ENCODE measurements at regions of chr19 and their contacts with region 1.

Region 1: DNA sequence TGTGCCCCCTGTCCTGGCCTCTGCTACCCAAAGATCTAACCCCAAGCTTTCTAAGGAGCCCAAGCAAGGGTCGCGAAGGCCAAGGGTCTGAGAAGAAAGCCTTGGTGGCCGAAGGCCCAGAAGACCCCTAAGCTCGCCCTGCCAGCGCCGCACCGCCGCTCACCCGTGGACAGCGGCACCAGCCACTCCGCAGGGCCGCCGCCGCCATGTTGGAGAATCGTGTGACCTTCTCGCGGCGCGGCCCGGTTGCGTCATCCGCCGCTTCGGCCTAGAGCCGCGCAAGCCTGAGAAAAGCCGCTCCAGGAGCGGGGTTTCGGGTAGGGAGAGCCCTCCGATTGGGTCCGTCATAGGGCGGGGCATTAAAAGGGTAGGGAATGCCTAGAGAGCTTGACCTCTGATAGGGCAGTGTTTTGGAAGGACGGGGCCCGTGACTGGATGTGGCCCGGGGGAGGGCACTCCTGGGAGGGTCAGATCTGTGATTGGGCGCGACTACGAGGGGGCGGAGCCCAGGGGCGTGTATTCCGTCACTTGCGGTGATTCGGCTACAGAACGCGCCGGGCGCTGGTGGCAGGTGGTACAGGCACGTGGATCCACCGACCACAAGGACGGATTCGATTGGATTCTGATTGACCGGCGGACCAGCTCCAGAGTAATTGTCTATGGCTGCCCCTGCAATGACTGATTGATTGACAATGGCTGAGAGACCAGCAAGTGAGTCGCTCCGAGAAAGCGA is at the start of gene TIMM44:
- DNase-seq: peak; percentile 100
- ATAC-seq: peak; percentile 98
- H3K4me3 ChIP-seq: peak within 1 kb of the TSS; percentile 91
- H3K27ac ChIP-seq: peak within 1 kb of the TSS; percentile 75
- H3K4me1 ChIP-seq: peaks cover 14% of the 10 kb centered on the region
- H3K27me3 ChIP-seq: no peaks in the 10 kb centered on the region
- CTCF ChIP-seq: no peak
- total RNA-seq, gene TIMM44: 191 and 262 TPM in 2 replicates

Region 2: GRCh38 chr19:7986321-7987083 is 42.9 kb after region 1 on chr19:
- CTCF ChIA-PET with region 1: interaction called, 3 read pairs
- POLR2A ChIA-PET with region 1: no interaction called
- intact Hi-C with region 1: loop called (anchors 5 kb)
- DNase-seq: peak; percentile 94
- ATAC-seq: peak; percentile 71
- H3K4me3 ChIP-seq: peak overlapping the region; percentile 19; the same call in 1 of the 2 replicates
- H3K27ac ChIP-seq: peak overlapping the region; percentile 100
- H3K4me1 ChIP-seq: peaks cover 59% of the 10 kb centered on the region
- H3K27me3 ChIP-seq: no peaks in the 10 kb centered on the region
- CTCF ChIP-seq: no peak

Region 3: DNA sequence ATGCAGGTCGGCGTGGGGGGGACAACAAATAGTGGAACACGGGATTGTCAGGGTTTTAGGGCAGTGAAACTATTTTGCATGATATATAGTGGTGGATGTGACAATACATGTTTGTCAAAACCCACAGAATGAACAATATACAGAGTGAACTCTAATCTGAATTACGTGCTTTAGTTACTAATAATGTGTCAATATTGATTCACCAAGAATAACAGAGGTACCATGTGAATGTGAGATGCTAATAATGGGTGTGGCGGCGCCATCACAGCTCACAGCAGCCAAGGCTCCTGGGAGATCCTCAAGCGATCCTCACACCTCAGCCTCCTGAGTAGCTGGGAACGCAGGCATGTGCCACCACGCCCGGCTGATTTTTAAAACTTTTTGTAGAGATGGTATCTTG is 49.0 kb after region 1 on chr19:
- CTCF ChIA-PET with region 1: interaction called, 6 read pairs
- POLR2A ChIA-PET with region 1: interaction called, 16 read pairs
- intact Hi-C with region 1: loop called (anchors 5 kb)
- DNase-seq: peak; percentile 96
- ATAC-seq: peak; percentile 76
- H3K4me3 ChIP-seq: peak overlapping the region; percentile 18; the same call in 1 of the 2 replicates
- H3K27ac ChIP-seq: peak overlapping the region; percentile 89
- H3K4me1 ChIP-seq: peaks cover 64% of the 10 kb centered on the region
- H3K27me3 ChIP-seq: no peaks in the 10 kb centered on the region
- CTCF ChIP-seq: no peak

Region 4: GRCh38 chr19:8158411-8159074 is 214.9 kb after region 1 on chr19:
- CTCF ChIA-PET with region 1: no interaction called
- POLR2A ChIA-PET with region 1: no interaction called
- intact Hi-C with region 1: no loop called
- DNase-seq: peak; percentile 91
- ATAC-seq: peak; percentile 55
- H3K4me3 ChIP-seq: no peak overlapping the region
- H3K27ac ChIP-seq: no peak overlapping the region
- H3K4me1 ChIP-seq: peaks cover 20% of the 10 kb centered on the region
- H3K27me3 ChIP-seq: no peaks in the 10 kb centered on the region
- CTCF ChIP-seq: peak; percentile 89